ENCODE measurements at regions of chr11 and their contacts with region 1.

Region 1: DNA sequence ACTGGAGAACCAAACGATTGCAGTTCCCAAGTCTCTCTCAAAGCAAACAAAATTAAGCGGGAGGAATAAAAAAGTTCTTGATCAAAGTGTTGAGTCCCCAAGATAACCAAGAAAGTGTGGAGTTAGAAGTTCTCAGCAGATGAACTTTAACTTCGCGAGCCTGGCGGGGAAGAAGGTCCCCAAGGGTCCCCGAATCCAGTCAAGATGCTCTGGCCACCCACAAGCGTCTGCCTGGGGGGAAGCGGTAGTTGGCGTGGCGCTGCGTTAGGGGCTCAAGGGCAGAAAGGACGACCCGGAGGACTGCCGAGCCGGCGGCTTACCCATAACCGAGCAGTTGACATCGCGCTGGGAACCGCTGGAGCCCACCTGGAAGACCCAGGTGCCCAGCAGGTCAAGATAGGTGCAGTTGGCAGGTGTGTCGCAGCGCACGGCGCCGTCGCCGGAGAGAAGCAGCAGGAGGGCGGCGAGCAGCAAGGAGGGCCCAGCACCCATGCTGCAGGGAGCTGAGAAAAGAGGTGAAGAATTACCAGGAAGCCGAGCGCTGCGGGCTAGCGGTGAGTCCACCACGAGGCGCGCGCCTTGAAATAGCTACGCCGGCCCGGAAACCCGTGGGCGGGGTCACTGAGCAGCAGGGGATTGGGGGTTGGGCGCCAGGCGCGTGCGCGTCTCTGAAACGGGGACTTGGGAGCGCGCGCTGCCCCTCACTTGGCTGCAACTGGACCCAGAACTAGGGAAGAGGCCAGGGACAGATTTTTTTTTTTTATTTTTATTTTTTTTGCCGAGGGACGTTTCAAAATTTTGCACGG is at the start of gene CTSC:
- DNase-seq: peak; percentile 79 to 93 (median 86)
- ATAC-seq: peak; percentile 94
- H3K4me3 ChIP-seq: peak within 1 kb of the TSS; percentile 97
- H3K4me3 Mint-ChIP-seq: peak within 1 kb of the TSS; percentile 88 to 100 (median 99)
- H3K27ac ChIP-seq: peak within 1 kb of the TSS; percentile 70
- H3K27ac Mint-ChIP-seq: peak within 1 kb of the TSS; percentile 88 to 99 (median 96)
- H3K4me1 ChIP-seq: peaks cover 0 to 36% of the 10 kb centered on the region in 2 donors
- H3K4me1 Mint-ChIP-seq: peaks cover 30 to 76% (median 63%) of the 10 kb centered on the region in 7 donors
- H3K27me3 ChIP-seq: no peaks in the 10 kb centered on the region
- H3K27me3 Mint-ChIP-seq: no peaks in the 10 kb centered on the region
- total RNA-seq, gene CTSC: 26.9 to 174 (median 45.2) TPM

Region 2: GRCh38 chr11:88231894-88232482 is 105.4 kb before region 1 on chr11:
- CTCF ChIA-PET with region 1: no interaction called
- POLR2A ChIA-PET with region 1: no interaction called
- intact Hi-C with region 1: loop called (anchors 5 kb)
- DNase-seq: peak in 5 of 9 donors; percentile 1 to 50 (median 29)
- ATAC-seq: peak; percentile 65
- H3K4me3 ChIP-seq: no peak overlapping the region
- H3K4me3 Mint-ChIP-seq: no peak overlapping the region
- H3K27ac ChIP-seq: no peak overlapping the region
- H3K27ac Mint-ChIP-seq: no peak overlapping the region
- H3K4me1 ChIP-seq: no peaks in the 10 kb centered on the region
- H3K4me1 Mint-ChIP-seq: peaks cover 0 to 4% (median 0%) of the 10 kb centered on the region in 7 donors
- H3K27me3 ChIP-seq: no peaks in the 10 kb centered on the region
- H3K27me3 Mint-ChIP-seq: peaks cover 0 to 8% (median 0%) of the 10 kb centered on the region in 5 donors

Region 3: DNA sequence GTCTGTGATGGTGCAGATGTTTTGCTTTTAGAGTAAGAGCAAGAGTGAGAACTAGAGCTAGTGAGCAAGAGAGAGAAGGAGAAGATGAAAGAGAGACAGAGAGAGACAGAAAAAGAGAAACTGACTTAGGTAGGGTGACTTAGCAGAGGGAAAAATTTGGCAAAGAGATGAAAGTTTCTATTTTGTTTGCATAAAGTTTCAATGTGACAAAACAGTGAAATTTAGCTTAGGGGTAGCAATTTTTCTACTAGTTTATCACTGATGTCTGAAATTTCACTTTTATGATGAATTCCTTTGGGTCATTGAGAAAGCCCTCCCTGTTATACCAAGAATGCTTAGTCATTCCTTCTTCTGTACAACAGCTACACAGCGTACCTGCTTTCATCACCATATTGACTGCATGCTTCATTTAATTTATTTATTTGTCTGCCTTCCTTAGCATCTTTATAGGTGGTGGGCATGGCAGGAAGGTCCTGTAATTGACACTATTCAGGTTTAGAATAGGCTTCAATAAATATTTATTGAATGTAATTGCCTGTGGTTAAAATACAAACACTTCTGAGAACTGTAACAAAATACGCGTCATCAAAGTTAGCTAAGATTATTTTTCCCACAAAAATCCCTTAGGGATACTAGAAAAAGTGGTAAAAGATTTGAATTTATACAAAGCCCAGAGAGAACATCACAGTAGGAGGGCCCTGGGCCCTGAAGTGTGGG is 20.1 kb after region 1 on chr11:
- CTCF ChIA-PET with region 1: interaction called, 5 read pairs
- POLR2A ChIA-PET with region 1: interaction called, 7 read pairs
- intact Hi-C with region 1: loop called (anchors 1 to 2 kb)
- DNase-seq: no peak
- ATAC-seq: peak; percentile 32
- H3K4me3 ChIP-seq: no peak overlapping the region
- H3K4me3 Mint-ChIP-seq: peak overlapping the region in 1 of 10 donors; percentile 59
- H3K27ac ChIP-seq: no peak overlapping the region
- H3K27ac Mint-ChIP-seq: peak overlapping the region in 2 of 9 donors; percentile 63 to 71
- H3K4me1 ChIP-seq: peaks cover 16 to 20% of the 10 kb centered on the region in 2 donors
- H3K4me1 Mint-ChIP-seq: peaks cover 19 to 48% (median 38%) of the 10 kb centered on the region in 7 donors
- H3K27me3 ChIP-seq: no peaks in the 10 kb centered on the region
- H3K27me3 Mint-ChIP-seq: peaks cover 0 to 3% (median 0%) of the 10 kb centered on the region in 5 donors

Region 4: GRCh38 chr11:88414385-88414861 is 77.0 kb after region 1 on chr11:
- CTCF ChIA-PET with region 1: no interaction called
- POLR2A ChIA-PET with region 1: interaction called, 7 read pairs
- intact Hi-C with region 1: loop called (anchors 1 to 2 kb)
- DNase-seq: peak in 6 of 9 donors; percentile 16 to 50 (median 38)
- ATAC-seq: peak; percentile 73
- H3K4me3 ChIP-seq: peak overlapping the region; percentile 18
- H3K4me3 Mint-ChIP-seq: peak overlapping the region; percentile 58 to 84 (median 73)
- H3K27ac ChIP-seq: peak overlapping the region; percentile 6
- H3K27ac Mint-ChIP-seq: peak overlapping the region in 7 of 9 donors; percentile 48 to 88 (median 74)
- H3K4me1 ChIP-seq: peaks cover 24 to 37% of the 10 kb centered on the region in 2 donors
- H3K4me1 Mint-ChIP-seq: peaks cover 27 to 61% (median 34%) of the 10 kb centered on the region in 7 donors
- H3K27me3 ChIP-seq: no peaks in the 10 kb centered on the region
- H3K27me3 Mint-ChIP-seq: no peaks in the 10 kb centered on the region

Region 5: GRCh38 chr11:88849368-88849767 is 512.0 kb after region 1 on chr11:
- CTCF ChIA-PET with region 1: no interaction called
- POLR2A ChIA-PET with region 1: no interaction called
- intact Hi-C with region 1: loop called in 1 of 2 experiments (anchors 5 kb)
- DNase-seq: no peak
- ATAC-seq: no peak
- H3K4me3 ChIP-seq: no peak overlapping the region
- H3K4me3 Mint-ChIP-seq: no peak overlapping the region
- H3K27ac ChIP-seq: no peak overlapping the region
- H3K27ac Mint-ChIP-seq: no peak overlapping the region
- H3K4me1 ChIP-seq: peaks cover 4 to 14% of the 10 kb centered on the region in 2 donors
- H3K4me1 Mint-ChIP-seq: peaks cover 7 to 38% (median 26%) of the 10 kb centered on the region in 7 donors
- H3K27me3 ChIP-seq: no peaks in the 10 kb centered on the region
- H3K27me3 Mint-ChIP-seq: peaks cover 0 to 5% (median 0%) of the 10 kb centered on the region in 5 donors